ENCODE measurements at regions of chr3 and their contacts with region 1.

Region 1: GRCh38 chr3:99833617-99834205 is 16.0 kb downstream of the CMSS1 start:
- DNase-seq: no peak
- ATAC-seq: no peak
- H3K4me3 ChIP-seq: no peak overlapping the region
- H3K27ac ChIP-seq: peak overlapping the region; percentile 4 to 66 (median 48)
- H3K4me1 ChIP-seq: peaks cover 7 to 12% of the 10 kb centered on the region in 2 donors
- H3K27me3 ChIP-seq: no peaks in the 10 kb centered on the region
- CTCF ChIP-seq: no peak
- POLR2A ChIP-seq: no peak

Region 2: GRCh38 chr3:99720985-99721632 is 112.6 kb before region 1 on chr3:
- in situ Hi-C with region 1: no loop called
- intact Hi-C with region 1: no loop called
- DNase-seq: no peak
- ATAC-seq: no peak
- H3K4me3 ChIP-seq: no peak overlapping the region
- H3K27ac ChIP-seq: no peak overlapping the region
- H3K4me1 ChIP-seq: no peaks in the 10 kb centered on the region
- H3K27me3 ChIP-seq: no peaks in the 10 kb centered on the region
- CTCF ChIP-seq: no peak
- POLR2A ChIP-seq: no peak

Region 3: DNA sequence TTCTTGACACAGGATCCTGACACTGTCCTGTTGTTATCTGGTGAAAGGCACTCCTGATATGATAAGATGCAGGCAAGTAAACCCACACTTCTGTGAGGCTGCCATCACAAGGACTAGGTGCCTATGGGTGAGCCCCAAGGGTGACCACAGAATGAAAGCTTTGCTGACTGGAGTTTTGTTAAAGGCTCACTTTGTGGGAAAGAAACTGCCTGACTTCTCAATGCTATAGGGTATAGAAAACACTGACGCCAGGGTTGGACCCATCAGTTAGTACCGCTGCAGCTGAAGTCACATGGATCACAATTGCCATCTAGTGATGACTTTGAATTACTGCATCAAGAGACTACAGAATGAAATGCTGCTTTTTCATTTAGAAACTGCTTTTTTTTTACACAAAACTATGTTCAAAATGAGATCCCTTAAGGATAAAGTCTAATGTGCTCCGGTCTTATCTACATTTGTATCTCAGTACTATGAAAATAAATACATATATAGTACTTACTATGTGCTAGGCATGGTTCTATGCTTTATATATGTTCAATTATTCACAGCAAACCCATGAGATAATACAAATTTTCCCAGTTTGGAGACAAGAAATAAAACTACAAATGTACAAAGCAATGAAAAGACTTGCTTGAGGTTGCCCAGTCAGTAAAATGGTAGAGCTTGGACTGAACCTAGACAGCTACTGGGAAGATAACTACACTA is 80.3 kb before region 1 on chr3:
- in situ Hi-C with region 1: no loop called
- intact Hi-C with region 1: no loop called
- DNase-seq: no peak
- ATAC-seq: peak in 1 of 2 donors; percentile 49
- H3K4me3 ChIP-seq: no peak overlapping the region
- H3K27ac ChIP-seq: no peak overlapping the region
- H3K4me1 ChIP-seq: peaks cover 7% of the 10 kb centered on the region in 2 donors
- H3K27me3 ChIP-seq: no peaks in the 10 kb centered on the region
- CTCF ChIP-seq: peak; percentile 38 to 63 (median 54)
- POLR2A ChIP-seq: no peak

Region 4: DNA sequence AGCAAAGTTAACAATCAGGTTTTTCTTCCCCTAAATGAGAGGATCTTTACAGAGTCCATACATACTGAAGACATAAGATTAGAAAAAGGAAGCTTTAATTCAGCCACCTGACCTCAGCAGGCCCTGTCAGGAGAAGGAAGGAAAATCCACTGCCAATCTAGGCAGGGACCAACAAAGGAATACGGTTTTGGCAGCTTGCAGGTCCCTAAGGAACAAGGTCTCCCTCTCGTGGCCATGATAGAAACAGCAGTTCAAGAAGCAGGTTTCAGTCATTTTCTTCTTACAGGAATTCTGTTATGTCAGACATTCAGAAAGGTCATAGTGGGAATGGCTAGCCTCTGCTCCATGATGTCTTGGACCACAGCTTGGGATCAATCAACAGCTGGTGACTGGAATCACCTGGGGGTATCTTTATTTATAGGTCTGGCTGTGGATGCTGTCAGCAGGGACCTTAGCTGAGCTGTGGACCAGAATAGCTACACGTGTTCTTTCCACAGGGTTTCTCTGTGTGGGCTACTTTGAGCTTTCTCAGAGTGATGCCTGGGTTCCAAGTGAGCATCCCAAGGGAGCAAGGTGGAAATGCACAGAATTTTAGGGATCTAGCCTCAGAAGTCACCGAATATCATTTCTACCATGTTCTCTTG is 25.4 kb before region 1 on chr3:
- in situ Hi-C with region 1: no loop called
- intact Hi-C with region 1: no loop called
- DNase-seq: peak in 1 of 2 donors; percentile 30
- ATAC-seq: peak; percentile 52 to 78
- H3K4me3 ChIP-seq: no peak overlapping the region
- H3K27ac ChIP-seq: no peak overlapping the region
- H3K4me1 ChIP-seq: peaks cover 5 to 7% of the 10 kb centered on the region in 2 donors
- H3K27me3 ChIP-seq: no peaks in the 10 kb centered on the region
- CTCF ChIP-seq: peak; percentile 40 to 80 (median 59)
- POLR2A ChIP-seq: no peak

Region 5: DNA sequence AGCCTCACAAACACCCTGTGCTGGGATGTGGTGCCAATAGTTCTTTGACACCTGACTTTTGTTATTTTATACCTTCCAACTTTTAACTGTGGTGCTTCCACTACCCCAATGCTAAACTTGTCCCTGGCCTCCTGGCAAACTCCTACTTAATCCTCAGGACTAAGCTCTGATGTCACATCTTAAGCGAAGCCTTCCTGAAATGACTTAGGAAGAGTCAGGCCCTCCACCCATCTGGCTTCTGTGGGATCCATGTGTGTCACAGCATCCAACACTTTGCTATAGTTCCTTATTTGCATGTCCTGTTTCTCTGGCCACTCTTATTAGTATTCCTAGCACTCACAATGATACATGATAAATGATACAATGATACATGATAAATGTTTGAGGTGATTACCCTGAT is 147.4 kb after region 1 on chr3:
- in situ Hi-C with region 1: no loop called
- intact Hi-C with region 1: no loop called
- DNase-seq: no peak
- ATAC-seq: no peak
- H3K4me3 ChIP-seq: no peak overlapping the region
- H3K27ac ChIP-seq: peak overlapping the region; percentile 35 to 66 (median 51)
- H3K4me1 ChIP-seq: peaks cover 18 to 20% of the 10 kb centered on the region in 2 donors
- H3K27me3 ChIP-seq: no peaks in the 10 kb centered on the region
- CTCF ChIP-seq: no peak
- POLR2A ChIP-seq: no peak

Region 6: DNA sequence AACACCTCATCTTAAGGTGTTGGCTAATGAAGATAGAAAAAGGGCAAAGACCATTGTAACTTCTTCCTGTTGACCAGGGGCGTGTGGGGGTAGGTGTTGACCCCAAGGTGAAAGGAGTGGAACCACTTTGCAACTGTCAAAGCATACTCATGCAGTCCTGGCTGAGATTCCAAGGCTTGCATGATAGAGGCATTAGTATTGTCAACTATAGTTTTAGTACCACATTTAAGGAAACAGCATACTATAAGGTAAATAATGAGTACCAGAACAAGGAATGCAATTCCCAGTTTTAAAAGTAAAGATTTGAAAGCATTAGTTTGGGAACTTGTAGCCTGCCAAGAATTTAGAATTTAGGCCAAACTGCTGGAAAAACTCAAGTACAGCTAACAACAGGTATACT is 747.9 kb after region 1 on chr3:
- in situ Hi-C with region 1: loop called in 2 of 4 experiments (anchors 10 kb)
- intact Hi-C with region 1: no loop called
- DNase-seq: no peak
- ATAC-seq: no peak
- H3K4me3 ChIP-seq: no peak overlapping the region
- H3K27ac ChIP-seq: no peak overlapping the region
- H3K4me1 ChIP-seq: no peaks in the 10 kb centered on the region
- H3K27me3 ChIP-seq: no peaks in the 10 kb centered on the region
- CTCF ChIP-seq: no peak
- POLR2A ChIP-seq: no peak